HEK293 (cell line): ENCODE measurements at regions of chr11 and their contacts with region 1.

Region 1: GRCh38 chr11:119533921-119534736 is 111.2 kb upstream of the THY1 start:
- H3K4me3 ChIP-seq: no peak overlapping the region
- H3K27ac ChIP-seq: no peak overlapping the region
- H3K4me1 ChIP-seq: no peaks in the 10 kb centered on the region
- CTCF ChIP-seq: peak; percentile 55

Region 2: GRCh38 chr11:119481667-119482400 is 52.3 kb before region 1 on chr11:
- CTCF ChIA-PET with region 1: interaction called, 11 read pairs
- POLR2A ChIA-PET with region 1: no interaction called
- H3K4me3 ChIP-seq: no peak overlapping the region
- H3K27ac ChIP-seq: no peak overlapping the region
- H3K4me1 ChIP-seq: no peaks in the 10 kb centered on the region
- CTCF ChIP-seq: no peak; the same call in 1 of the 2 replicates

Region 3: DNA sequence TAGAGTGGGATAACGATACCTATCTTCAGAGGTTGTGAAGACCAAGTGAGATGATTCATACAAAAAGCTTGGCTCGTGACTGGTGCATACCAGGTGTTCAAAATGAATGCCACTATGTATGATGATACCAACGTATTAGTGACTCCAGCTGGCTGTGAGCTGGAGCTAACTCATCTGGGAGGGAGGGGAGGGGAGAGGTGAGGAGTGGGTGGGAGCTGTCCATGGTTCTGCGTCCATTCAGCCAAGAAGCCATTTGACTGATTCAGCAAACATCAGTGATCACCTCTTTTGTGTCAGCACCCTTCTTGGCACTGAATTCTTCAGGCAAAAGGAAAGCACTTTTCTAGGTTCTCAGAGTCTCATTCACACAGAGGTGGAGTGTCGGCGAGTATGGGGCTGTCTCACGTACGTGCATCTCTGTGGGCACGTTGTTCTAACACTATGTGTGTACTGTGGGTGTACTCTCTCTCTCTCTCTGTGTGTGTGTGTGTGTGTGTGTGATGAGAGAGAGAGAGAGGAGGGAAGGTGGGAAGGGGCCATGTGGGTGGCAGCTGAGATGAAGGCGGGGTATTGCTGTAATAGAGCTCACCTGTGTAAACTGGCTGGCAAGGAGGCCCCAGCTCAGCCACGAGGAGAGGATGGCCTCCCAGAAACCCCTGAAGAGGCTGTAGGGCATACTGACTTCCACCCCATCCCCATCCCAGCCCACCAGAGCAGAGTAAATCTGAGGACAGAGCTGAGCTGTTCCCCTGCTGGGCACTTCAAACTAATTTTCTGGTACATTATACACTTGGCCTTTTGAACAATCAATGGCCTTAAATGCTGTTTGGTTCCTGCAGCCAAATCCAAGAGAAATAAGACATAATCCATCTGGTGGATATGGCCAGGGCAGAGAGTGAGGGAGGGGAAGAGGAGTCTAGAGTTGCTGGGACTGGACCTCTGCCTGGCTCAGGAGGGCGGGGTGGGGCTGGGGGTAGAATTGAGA is 15.1 kb before region 1 on chr11:
- CTCF ChIA-PET with region 1: interaction called, 19 read pairs
- POLR2A ChIA-PET with region 1: no interaction called
- H3K4me3 ChIP-seq: no peak overlapping the region
- H3K27ac ChIP-seq: no peak overlapping the region
- H3K4me1 ChIP-seq: no peaks in the 10 kb centered on the region
- CTCF ChIP-seq: no peak

Region 4: GRCh38 chr11:119550053-119550752 is 16.1 kb after region 1 on chr11:
- CTCF ChIA-PET with region 1: interaction called, 10 read pairs
- POLR2A ChIA-PET with region 1: no interaction called
- H3K4me3 ChIP-seq: no peak overlapping the region
- H3K27ac ChIP-seq: no peak overlapping the region
- H3K4me1 ChIP-seq: no peaks in the 10 kb centered on the region
- CTCF ChIP-seq: no peak

Region 5: DNA sequence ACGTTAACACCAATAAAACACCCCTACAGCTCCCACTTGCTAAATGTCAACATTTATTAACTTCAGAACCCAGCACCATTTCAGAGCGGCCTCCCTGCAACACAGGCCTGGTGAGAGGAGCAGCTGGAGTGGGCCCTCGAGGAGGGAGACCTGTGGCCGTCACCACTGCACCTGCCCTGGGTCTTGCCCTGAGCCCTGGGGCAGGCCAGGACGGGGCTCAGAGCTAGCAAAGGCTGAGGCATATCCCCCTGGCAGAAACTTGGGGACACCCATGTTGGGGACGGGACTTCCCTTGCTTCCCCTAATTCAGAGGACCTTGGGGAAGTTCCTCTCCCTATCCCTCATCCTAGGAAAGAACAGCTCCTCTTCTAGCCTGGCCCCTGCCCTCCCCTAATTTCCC is 26.2 kb after region 1 on chr11:
- CTCF ChIA-PET with region 1: interaction called, 23 read pairs
- POLR2A ChIA-PET with region 1: no interaction called
- H3K4me3 ChIP-seq: no peak overlapping the region
- H3K27ac ChIP-seq: no peak overlapping the region
- H3K4me1 ChIP-seq: no peaks in the 10 kb centered on the region
- CTCF ChIP-seq: no peak

Region 6: GRCh38 chr11:119666463-119667131 is 132.5 kb after region 1 on chr11:
- CTCF ChIA-PET with region 1: no interaction called
- POLR2A ChIA-PET with region 1: no interaction called
- H3K4me3 ChIP-seq: no peak overlapping the region
- H3K27ac ChIP-seq: no peak overlapping the region
- H3K4me1 ChIP-seq: no peaks in the 10 kb centered on the region
- CTCF ChIP-seq: peak; percentile 78